ENCODE measurements at regions of chr15 and their contacts with region 1.

Region 1: GRCh38 chr15:67839929-67840748 is at the start of gene RNU6-1:
- DNase-seq: peak; percentile 96
- ATAC-seq: peak; percentile 86
- H3K4me3 Mint-ChIP-seq: peak within 1 kb of the TSS; percentile 82
- H3K27ac Mint-ChIP-seq: peak within 1 kb of the TSS; percentile 97
- H3K4me1 Mint-ChIP-seq: peaks cover 23% of the 10 kb centered on the region
- H3K27me3 Mint-ChIP-seq: peaks cover 9% of the 10 kb centered on the region
- total RNA-seq, gene RNU6-1: not detected

Region 2: GRCh38 chr15:66700802-66701421 is 1139.2 kb before region 1 on chr15:
- CTCF ChIA-PET with region 1: no interaction called
- POLR2A ChIA-PET with region 1: no interaction called
- intact Hi-C with region 1: loop called in 1 of 2 experiments (anchors 5 kb)
- DNase-seq: peak; percentile 93
- ATAC-seq: peak; percentile 86
- H3K4me3 Mint-ChIP-seq: peak overlapping the region; percentile 78
- H3K27ac Mint-ChIP-seq: peak overlapping the region; percentile 40
- H3K4me1 Mint-ChIP-seq: peaks cover 14% of the 10 kb centered on the region
- H3K27me3 Mint-ChIP-seq: peaks cover 16% of the 10 kb centered on the region

Region 3: GRCh38 chr15:67240235-67241131 is 599.7 kb before region 1 on chr15:
- CTCF ChIA-PET with region 1: no interaction called
- POLR2A ChIA-PET with region 1: no interaction called
- intact Hi-C with region 1: loop called in 1 of 2 experiments (anchors 2 kb)
- DNase-seq: peak; percentile 48
- ATAC-seq: peak; percentile 45
- H3K4me3 Mint-ChIP-seq: peak overlapping the region; percentile 17
- H3K27ac Mint-ChIP-seq: peak overlapping the region; percentile 89
- H3K4me1 Mint-ChIP-seq: peaks cover 49% of the 10 kb centered on the region
- H3K27me3 Mint-ChIP-seq: no peaks in the 10 kb centered on the region

Region 4: DNA sequence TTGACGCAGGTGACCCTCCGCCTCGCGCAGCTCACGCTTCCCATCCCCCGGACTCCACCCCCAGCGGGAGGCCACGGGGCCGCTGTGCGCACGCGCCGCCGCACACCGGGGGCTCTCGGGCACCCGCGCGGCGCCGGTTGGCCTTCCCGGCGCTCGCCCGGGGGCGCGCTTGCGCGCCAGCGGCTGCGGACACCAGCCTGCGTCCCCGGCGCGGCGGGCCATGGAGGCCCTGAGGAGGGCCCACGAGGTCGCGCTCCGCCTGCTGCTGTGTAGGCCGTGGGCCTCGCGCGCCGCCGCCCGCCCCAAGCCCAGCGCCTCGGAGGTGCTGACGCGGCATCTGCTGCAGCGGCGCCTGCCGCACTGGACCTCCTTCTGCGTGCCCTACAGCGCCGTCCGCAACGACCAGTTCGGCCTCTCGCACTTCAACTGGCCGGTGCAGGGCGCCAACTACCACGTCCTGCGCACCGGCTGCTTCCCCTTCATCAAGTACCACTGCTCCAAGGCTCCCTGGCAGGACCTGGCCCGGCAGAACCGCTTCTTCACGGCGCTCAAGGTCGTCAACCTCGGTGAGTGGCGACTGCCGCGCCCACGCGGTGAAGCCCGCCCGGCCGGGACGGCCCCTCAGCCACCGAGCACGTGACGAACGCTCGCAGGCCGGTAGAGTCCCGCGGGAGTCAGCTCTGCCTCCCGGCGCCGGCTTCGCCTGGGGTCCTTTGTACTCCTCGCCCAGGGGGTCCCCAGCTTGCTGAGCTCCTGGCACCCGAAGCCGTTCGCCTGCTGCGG is 318.9 kb before region 1 on chr15 and contains the start of gene C15orf61:
- CTCF ChIA-PET with region 1: interaction called, 5 read pairs
- POLR2A ChIA-PET with region 1: no interaction called
- intact Hi-C with region 1: loop called (anchors 1 to 2 kb)
- DNase-seq: peak; percentile 90
- ATAC-seq: peak; percentile 79
- H3K4me3 Mint-ChIP-seq: peak within 1 kb of the TSS; percentile 96
- H3K27ac Mint-ChIP-seq: peak within 1 kb of the TSS; percentile 98
- H3K4me1 Mint-ChIP-seq: peaks cover 21% of the 10 kb centered on the region
- H3K27me3 Mint-ChIP-seq: no peaks in the 10 kb centered on the region
- total RNA-seq, gene C15orf61: 3.4 to 5.0 TPM

Region 5: DNA sequence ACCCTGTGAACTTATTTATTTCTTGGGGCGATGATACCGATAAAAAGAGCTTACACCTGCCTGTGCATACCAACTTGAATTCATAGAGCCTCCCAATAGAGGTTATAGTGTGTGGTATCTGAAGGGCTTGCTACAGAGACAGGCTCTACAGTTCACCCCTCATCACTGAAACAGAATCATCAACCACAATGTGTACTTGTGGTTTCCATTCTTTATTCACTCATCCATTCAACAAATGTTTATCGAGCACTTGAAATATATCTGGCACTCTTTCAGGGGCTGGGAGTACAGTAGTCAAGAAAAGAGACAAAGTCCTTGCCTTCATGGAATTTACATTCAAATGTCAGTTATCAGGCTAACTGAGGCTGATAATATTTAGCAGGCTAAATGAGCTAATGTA is 149.2 kb before region 1 on chr15:
- CTCF ChIA-PET with region 1: no interaction called
- POLR2A ChIA-PET with region 1: no interaction called
- intact Hi-C with region 1: no loop called
- DNase-seq: no peak
- ATAC-seq: no peak
- H3K4me3 Mint-ChIP-seq: no peak overlapping the region
- H3K27ac Mint-ChIP-seq: no peak overlapping the region
- H3K4me1 Mint-ChIP-seq: peaks cover 2% of the 10 kb centered on the region
- H3K27me3 Mint-ChIP-seq: no peaks in the 10 kb centered on the region

Region 6: DNA sequence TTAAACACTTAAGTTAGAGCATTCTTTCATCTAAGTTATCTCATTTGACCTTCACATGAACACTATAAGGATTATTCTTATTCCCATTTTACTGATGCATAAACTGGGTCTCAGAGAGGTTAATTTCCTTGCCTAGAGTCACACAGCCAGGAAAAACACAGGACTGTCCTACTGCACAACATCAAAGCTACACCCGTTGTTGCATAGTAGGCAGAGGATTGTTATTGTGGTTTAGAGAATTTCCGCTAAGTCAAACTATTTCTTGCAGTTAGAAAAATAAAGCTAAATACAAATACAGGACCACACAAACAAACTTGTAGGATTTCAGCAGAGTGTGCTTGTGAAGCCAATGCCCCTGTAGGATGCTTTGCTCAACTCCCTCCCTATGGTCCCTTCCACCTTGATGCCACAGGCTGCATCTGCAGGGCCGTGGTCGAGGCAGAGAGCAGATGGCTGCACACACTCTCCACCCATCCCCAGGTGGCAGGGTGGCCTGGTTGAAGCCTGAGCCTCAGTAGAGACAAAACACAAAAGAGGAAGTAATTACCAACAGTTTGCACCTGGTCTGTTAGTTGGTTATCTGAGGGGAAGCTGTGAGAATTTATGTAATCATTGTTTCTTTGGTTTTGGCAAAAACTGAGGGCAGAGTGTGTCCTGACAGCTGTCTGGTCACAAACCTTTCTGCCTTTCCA is 55.9 kb before region 1 on chr15:
- CTCF ChIA-PET with region 1: interaction called, 3 read pairs
- POLR2A ChIA-PET with region 1: no interaction called
- intact Hi-C with region 1: loop called in 1 of 2 experiments (anchors 1 kb)
- DNase-seq: no peak
- ATAC-seq: no peak
- H3K4me3 Mint-ChIP-seq: no peak overlapping the region
- H3K27ac Mint-ChIP-seq: no peak overlapping the region
- H3K4me1 Mint-ChIP-seq: peaks cover 28% of the 10 kb centered on the region
- H3K27me3 Mint-ChIP-seq: no peaks in the 10 kb centered on the region

Region 7: GRCh38 chr15:67803996-67804843 is 35.9 kb before region 1 on chr15:
- CTCF ChIA-PET with region 1: no interaction called
- POLR2A ChIA-PET with region 1: no interaction called
- intact Hi-C with region 1: no loop called
- DNase-seq: no peak
- ATAC-seq: no peak
- H3K4me3 Mint-ChIP-seq: no peak overlapping the region
- H3K27ac Mint-ChIP-seq: no peak overlapping the region
- H3K4me1 Mint-ChIP-seq: no peaks in the 10 kb centered on the region
- H3K27me3 Mint-ChIP-seq: no peaks in the 10 kb centered on the region

Region 8: GRCh38 chr15:67981848-67982247 is 141.7 kb after region 1 on chr15:
- CTCF ChIA-PET with region 1: no interaction called
- POLR2A ChIA-PET with region 1: no interaction called
- intact Hi-C with region 1: no loop called
- DNase-seq: no peak
- ATAC-seq: no peak
- H3K4me3 Mint-ChIP-seq: no peak overlapping the region
- H3K27ac Mint-ChIP-seq: no peak overlapping the region
- H3K4me1 Mint-ChIP-seq: no peaks in the 10 kb centered on the region
- H3K27me3 Mint-ChIP-seq: no peaks in the 10 kb centered on the region

Region 9: GRCh38 chr15:68017191-68017590 is 177.1 kb after region 1 on chr15:
- CTCF ChIA-PET with region 1: no interaction called
- POLR2A ChIA-PET with region 1: no interaction called
- intact Hi-C with region 1: no loop called
- DNase-seq: no peak
- ATAC-seq: no peak
- H3K4me3 Mint-ChIP-seq: no peak overlapping the region
- H3K27ac Mint-ChIP-seq: no peak overlapping the region
- H3K4me1 Mint-ChIP-seq: no peaks in the 10 kb centered on the region
- H3K27me3 Mint-ChIP-seq: peaks cover 1% of the 10 kb centered on the region

Region 10: DNA sequence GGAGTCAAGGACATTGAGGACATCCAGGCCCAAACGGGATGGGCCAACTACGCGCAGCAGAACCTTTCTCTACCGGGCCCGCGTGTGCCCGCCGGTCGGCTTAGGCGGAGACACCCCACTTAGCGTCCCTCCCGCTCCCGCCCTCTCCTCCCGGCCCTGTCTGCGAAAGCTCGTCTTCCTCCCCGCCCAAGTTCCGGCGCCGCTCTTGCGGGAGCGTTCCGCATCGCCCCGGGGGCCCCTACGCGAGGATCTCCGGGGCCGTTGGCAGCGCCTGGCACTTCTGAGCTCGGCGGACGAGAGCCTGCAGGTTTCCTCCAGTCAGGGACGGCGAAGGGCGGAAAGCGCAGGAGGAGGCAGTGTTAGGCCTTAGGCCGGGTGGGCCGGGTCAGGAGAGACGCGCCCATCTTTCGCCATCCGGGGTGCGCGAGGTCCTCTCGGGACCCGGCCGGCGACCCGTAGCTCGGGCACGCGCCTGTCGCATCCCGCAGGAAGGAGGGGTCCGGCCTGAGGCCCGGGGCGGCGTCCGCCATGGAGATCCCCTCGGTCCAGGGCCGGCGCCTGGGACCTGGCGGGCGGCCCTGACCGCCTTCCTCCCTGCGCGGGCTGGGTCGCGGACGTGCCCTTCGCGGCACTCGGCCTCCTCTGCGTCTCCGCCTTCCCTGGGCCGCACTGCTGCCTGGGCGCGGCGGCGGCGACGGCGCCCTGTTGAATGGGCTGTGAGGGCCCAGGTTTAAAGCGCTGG is 437.6 kb after region 1 on chr15 and contains the start of gene FEM1B:
- CTCF ChIA-PET with region 1: no interaction called
- POLR2A ChIA-PET with region 1: interaction called, 3 read pairs
- intact Hi-C with region 1: loop called in 1 of 2 experiments (anchors 1 kb)
- DNase-seq: peak; percentile 94
- ATAC-seq: peak; percentile 79
- H3K4me3 Mint-ChIP-seq: peak within 1 kb of the TSS; percentile 99
- H3K27ac Mint-ChIP-seq: peak within 1 kb of the TSS; percentile 99
- H3K4me1 Mint-ChIP-seq: peaks cover 43% of the 10 kb centered on the region
- H3K27me3 Mint-ChIP-seq: no peaks in the 10 kb centered on the region
- total RNA-seq, gene FEM1B: 41.1 to 50.0 TPM

Measured in activated CD4-positive, alpha-beta T cell treated with anti-CD3 and anti-CD28 coated beads for 36 hours (primary cell).